Activated naive CD4-positive, alpha-beta T cell treated with anti-CD3 and anti-CD28 coated beads for 36 hours (primary cell): ENCODE measurements at regions of chr17 and their contacts with region 1.

Region 1: DNA sequence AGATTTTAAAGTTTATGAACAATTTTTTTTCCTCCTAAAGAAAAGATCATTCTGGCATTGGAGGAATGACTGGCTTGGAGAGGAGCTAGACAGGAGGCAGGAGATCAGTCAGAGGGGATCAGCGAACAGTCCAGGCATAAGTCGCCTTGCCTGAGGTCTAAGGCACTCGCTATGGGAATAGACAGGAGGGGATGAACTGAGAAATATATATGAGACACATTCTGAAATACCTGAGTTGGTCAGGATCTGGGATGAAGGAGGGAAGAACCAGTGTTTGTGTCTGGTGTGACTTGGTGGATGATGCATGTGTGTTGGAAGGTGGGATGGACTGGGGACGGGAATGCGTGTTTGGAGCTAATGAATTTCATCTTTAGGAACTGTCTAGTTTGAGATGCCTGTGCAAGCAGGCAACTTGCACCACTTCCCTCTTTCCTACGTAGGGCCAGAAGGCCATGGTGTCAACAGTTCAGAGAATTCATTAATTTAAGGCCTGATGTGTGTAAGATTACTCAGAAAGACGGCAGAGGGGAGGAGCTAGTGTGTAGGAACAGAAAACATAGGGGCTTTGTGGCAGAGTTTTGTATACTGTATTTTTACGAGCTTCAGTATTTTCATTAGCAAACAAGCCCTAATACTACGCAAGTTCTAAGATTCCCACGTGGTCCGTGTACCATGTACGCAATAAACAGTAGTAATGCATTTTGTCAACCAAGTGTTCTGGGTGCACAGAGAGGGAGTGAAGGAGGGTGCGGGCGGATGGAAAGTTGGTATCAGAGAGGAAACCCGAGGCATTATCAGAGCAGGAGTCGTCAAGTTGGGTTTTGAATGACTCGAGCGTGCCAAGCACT is 825 bp downstream of the HEATR6 start:
- DNase-seq: peak; percentile 49
- H3K4me3 Mint-ChIP-seq: peak overlapping the region; percentile 85
- H3K27ac Mint-ChIP-seq: peak overlapping the region; percentile 82
- H3K4me1 Mint-ChIP-seq: peaks cover 20% of the 10 kb centered on the region
- H3K27me3 Mint-ChIP-seq: peaks cover 2% of the 10 kb centered on the region

Region 2: GRCh38 chr17:59964482-59965328 is 113.2 kb before region 1 on chr17 and contains the start of gene RNFT1:
- CTCF ChIA-PET with region 1: no interaction called
- intact Hi-C with region 1: loop called (anchors 2 kb)
- DNase-seq: peak; percentile 94
- H3K4me3 Mint-ChIP-seq: peak within 1 kb of the TSS; percentile 91
- H3K27ac Mint-ChIP-seq: peak within 1 kb of the TSS; percentile 95
- H3K4me1 Mint-ChIP-seq: peaks cover 22% of the 10 kb centered on the region
- H3K27me3 Mint-ChIP-seq: no peaks in the 10 kb centered on the region
- total RNA-seq, gene RNFT1: 29.1 to 31.1 TPM

Region 3: GRCh38 chr17:60677308-60678124 is 599.6 kb after region 1 on chr17 and contains the start of gene BCAS3:
- CTCF ChIA-PET with region 1: no interaction called
- intact Hi-C with region 1: loop called (anchors 2 kb)
- DNase-seq: peak; percentile 99
- H3K4me3 Mint-ChIP-seq: peak within 1 kb of the TSS; percentile 91
- H3K27ac Mint-ChIP-seq: peak within 1 kb of the TSS; percentile 79
- H3K4me1 Mint-ChIP-seq: peaks cover 11% of the 10 kb centered on the region
- H3K27me3 Mint-ChIP-seq: no peaks in the 10 kb centered on the region
- total RNA-seq, gene BCAS3: 7.2 to 7.5 TPM

Region 4: GRCh38 chr17:61927200-61928165 is 1849.6 kb after region 1 on chr17 and contains the start of gene INTS2:
- CTCF ChIA-PET with region 1: no interaction called
- intact Hi-C with region 1: loop called (anchors 10 kb)
- DNase-seq: peak; percentile 97
- H3K4me3 Mint-ChIP-seq: peak within 1 kb of the TSS; percentile 95
- H3K27ac Mint-ChIP-seq: peak within 1 kb of the TSS; percentile 89
- H3K4me1 Mint-ChIP-seq: peaks cover 17% of the 10 kb centered on the region
- H3K27me3 Mint-ChIP-seq: no peaks in the 10 kb centered on the region
- total RNA-seq, gene INTS2: 23.2 to 25.0 TPM